Right lobe of liver (tissue), 6 donors: ENCODE measurements at regions of chr15 and their contacts with region 1.

Region 1: DNA sequence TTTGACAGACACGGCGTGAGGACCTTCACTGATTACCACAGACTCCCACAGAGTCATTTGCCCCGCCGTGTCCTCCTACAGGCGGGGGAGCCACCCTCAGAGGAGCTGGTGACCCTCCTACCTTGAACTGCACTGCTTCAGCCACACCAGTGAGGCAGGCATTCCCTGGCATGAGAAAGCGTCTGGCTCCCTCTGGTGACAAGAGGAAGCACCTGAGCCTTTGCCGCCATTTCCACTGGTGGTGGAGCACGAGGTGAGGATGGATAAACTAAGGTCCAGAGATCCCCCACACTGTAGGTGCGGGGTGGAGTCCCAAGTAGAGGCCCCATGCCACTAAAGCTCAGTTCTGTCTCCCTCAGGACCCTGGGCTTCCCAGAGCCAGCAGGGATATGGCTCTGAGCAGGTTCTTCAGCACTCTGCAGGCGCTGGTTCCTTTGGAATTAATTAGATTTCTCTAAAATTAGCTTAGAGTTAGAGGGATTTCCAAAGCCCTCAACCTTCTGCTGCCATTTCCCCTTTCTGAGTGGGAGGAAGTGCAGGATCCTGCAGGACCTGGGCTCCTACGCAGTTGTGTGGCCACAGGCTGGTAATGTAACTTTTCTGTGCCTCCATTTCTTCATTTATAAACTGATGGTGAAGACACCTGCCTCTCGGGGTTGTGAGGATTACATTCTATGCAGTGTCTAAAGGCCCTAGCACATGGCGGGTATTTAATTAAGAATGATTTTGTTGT is 224.0 kb downstream of the SLCO3A1 start:
- DNase-seq: peak; percentile 71 to 74 (median 72)
- ATAC-seq: peak; percentile 78 to 86 (median 82)
- H3K4me3 ChIP-seq: no peak overlapping the region
- H3K27ac ChIP-seq: no peak overlapping the region
- H3K4me1 ChIP-seq: peaks cover 0 to 4% (median 0%) of the 10 kb centered on the region in 4 donors
- H3K27me3 ChIP-seq: no peaks in the 10 kb centered on the region
- CTCF ChIP-seq: peak; percentile 66 to 82 (median 76)
- POLR2A ChIP-seq: no peak

Region 2: GRCh38 chr15:91706322-91707032 is 371.0 kb before region 1 on chr15:
- intact Hi-C with region 1: loop called in 1 of 2 experiments (anchors 10 kb)
- DNase-seq: peak; percentile 61 to 74 (median 63)
- ATAC-seq: peak; percentile 88 to 95 (median 93)
- H3K4me3 ChIP-seq: no peak overlapping the region
- H3K27ac ChIP-seq: no peak overlapping the region
- H3K4me1 ChIP-seq: no peaks in the 10 kb centered on the region
- H3K27me3 ChIP-seq: no peaks in the 10 kb centered on the region
- CTCF ChIP-seq: peak; percentile 82 to 89 (median 88)
- POLR2A ChIP-seq: no peak

Region 3: GRCh38 chr15:91852741-91853510 is 224.6 kb before region 1 on chr15:
- intact Hi-C with region 1: loop called (anchors 10 kb)
- DNase-seq: peak; percentile 76 to 85 (median 82)
- ATAC-seq: peak; percentile 83 to 87 (median 86)
- H3K4me3 ChIP-seq: peak overlapping the region; percentile 63 to 65 (median 64)
- H3K27ac ChIP-seq: peak overlapping the region; percentile 79 to 86 (median 81)
- H3K4me1 ChIP-seq: peaks cover 0 to 10% (median 0%) of the 10 kb centered on the region in 4 donors
- H3K27me3 ChIP-seq: peaks cover 0 to 4% of the 10 kb centered on the region in 2 donors
- CTCF ChIP-seq: peak; percentile 64 to 77 (median 72)
- POLR2A ChIP-seq: no peak

Region 4: GRCh38 chr15:91947683-91948608 is 129.6 kb before region 1 on chr15:
- intact Hi-C with region 1: no loop called
- DNase-seq: no peak
- ATAC-seq: peak in 2 of 4 donors; percentile 5 to 21
- H3K4me3 ChIP-seq: no peak overlapping the region
- H3K27ac ChIP-seq: peak overlapping the region; percentile 12 to 55 (median 35)
- H3K4me1 ChIP-seq: peaks cover 0 to 19% (median 4%) of the 10 kb centered on the region in 4 donors
- H3K27me3 ChIP-seq: no peaks in the 10 kb centered on the region
- CTCF ChIP-seq: no peak
- POLR2A ChIP-seq: no peak